CD4-positive, alpha-beta memory T cell (primary cell): ENCODE measurements at regions of chr5 and their contacts with region 1.

Region 1: GRCh38 chr5:43484106-43484849 is 613 bp upstream of the TMEM267 start:
- DNase-seq: peak; percentile 85 to 89 (median 87)
- H3K4me3 ChIP-seq: peak overlapping the region; percentile 50 to 59
- H3K4me3 Mint-ChIP-seq: peak overlapping the region; percentile 96 to 99 (median 98)
- H3K27ac ChIP-seq: peak overlapping the region; percentile 92
- H3K27ac Mint-ChIP-seq: peak overlapping the region; percentile 98 to 100 (median 100)
- H3K4me1 ChIP-seq: peaks cover 40% of the 10 kb centered on the region
- H3K4me1 Mint-ChIP-seq: peaks cover 21 to 57% (median 31%) of the 10 kb centered on the region in 4 donors
- H3K27me3 ChIP-seq: no peaks in the 10 kb centered on the region
- H3K27me3 Mint-ChIP-seq: no peaks in the 10 kb centered on the region

Region 2: DNA sequence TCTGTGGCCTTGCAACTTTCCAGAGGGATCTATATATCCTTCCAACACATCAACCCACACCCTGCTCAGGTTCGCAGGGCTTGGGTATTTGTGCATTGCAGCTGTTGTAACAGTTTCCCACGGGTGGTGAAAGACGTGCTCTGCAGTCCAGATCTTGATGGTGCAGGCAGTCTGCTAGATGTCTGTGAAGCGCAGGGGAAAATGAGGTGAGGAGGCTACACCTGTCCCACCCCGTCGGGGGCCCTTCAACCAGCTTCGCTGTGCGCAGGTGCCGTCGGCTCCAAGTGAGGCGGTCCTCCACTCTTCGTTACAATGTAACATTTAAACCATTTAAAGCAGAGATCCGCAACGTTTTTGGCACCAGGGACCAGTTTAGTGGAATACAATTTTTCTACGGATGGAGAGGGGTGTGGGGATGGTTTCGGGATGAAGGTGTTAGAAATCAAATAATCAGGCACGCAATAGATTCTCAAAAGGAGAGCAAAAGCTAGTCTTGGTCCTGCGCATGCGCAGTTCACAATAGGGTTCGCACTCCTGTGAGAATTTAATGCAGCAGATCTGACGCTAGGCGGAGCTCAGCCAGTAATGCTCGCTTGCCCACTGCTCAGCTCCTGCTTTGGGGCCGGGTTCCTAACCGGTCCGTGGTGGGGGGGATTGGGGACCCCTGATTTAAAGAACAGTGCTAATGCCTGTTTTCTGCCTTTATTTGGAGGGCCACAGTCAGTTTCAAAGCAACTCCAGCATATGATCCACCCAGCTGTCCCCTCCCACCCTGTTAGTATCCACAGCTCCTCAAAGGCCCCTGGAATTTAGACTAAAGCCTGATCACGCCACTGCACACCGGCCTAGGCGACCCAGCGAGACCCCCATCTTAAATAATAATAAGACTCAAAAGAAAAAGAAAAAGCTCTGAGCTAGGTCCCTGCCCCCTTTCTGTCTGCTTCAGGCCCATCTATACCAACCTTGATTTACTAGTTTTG is 575.5 kb before region 1 on chr5:
- CTCF ChIA-PET with region 1: interaction called, 16 read pairs
- POLR2A ChIA-PET with region 1: interaction called, 22 read pairs
- intact Hi-C with region 1: loop called (anchors 5 kb)
- DNase-seq: peak; percentile 89 to 90 (median 89)
- H3K4me3 ChIP-seq: peak overlapping the region; percentile 40 to 56
- H3K4me3 Mint-ChIP-seq: peak overlapping the region; percentile 88 to 97 (median 93)
- H3K27ac ChIP-seq: peak overlapping the region; percentile 44
- H3K27ac Mint-ChIP-seq: peak overlapping the region; percentile 66 to 97 (median 95)
- H3K4me1 ChIP-seq: peaks cover 7% of the 10 kb centered on the region
- H3K4me1 Mint-ChIP-seq: peaks cover 8 to 18% (median 12%) of the 10 kb centered on the region in 4 donors
- H3K27me3 ChIP-seq: no peaks in the 10 kb centered on the region
- H3K27me3 Mint-ChIP-seq: peaks cover 10% of the 10 kb centered on the region in 2 donors

Region 3: DNA sequence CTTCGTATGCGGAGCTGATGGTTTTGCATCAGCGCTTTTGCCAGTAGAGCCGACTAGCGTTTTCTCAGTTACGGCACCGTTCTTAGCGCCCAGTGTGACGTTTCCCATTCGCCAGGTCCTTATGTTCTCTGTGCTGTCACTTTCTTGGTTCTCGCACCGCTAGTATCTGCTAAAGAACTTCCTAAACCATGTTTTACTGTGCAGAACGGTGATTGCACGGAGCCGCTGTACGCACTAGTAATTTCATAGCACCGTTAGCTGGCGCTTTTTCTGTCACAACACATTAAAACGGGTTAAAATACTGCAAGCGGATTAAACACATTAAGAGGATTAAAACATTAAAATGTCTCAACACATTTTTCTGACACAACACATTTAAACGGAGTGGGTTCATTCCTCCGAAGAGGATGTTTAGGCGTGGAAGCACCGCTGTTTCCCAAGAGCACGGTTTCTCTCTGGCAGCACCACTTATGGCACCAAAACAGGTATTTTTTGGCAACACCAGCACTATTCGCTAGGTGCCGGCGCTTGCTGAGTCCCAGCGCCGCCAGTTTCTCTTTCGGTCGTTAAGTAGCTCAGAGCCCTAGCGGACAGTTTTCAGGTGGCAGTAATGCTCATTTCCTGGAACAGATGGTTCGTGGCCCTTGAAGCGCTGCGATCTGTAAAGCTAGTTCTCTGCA is 464.5 kb before region 1 on chr5:
- CTCF ChIA-PET with region 1: interaction called, 14 read pairs
- POLR2A ChIA-PET with region 1: interaction called, 81 read pairs
- intact Hi-C with region 1: loop called (anchors 5 kb)
- DNase-seq: peak; percentile 84 to 94 (median 91)
- H3K4me3 ChIP-seq: peak overlapping the region; percentile 73 to 83
- H3K4me3 Mint-ChIP-seq: peak overlapping the region; percentile 94 to 99 (median 98)
- H3K27ac ChIP-seq: peak overlapping the region; percentile 94
- H3K27ac Mint-ChIP-seq: peak overlapping the region; percentile 99 to 100 (median 100)
- H3K4me1 ChIP-seq: peaks cover 40% of the 10 kb centered on the region
- H3K4me1 Mint-ChIP-seq: peaks cover 24 to 67% (median 34%) of the 10 kb centered on the region in 4 donors
- H3K27me3 ChIP-seq: no peaks in the 10 kb centered on the region
- H3K27me3 Mint-ChIP-seq: no peaks in the 10 kb centered on the region

Region 4: GRCh38 chr5:43120720-43121564 is 363.3 kb before region 1 on chr5 and contains the start of gene ZNF131:
- CTCF ChIA-PET with region 1: interaction called, 24 read pairs
- POLR2A ChIA-PET with region 1: interaction called, 122 read pairs
- intact Hi-C with region 1: loop called (anchors 1 kb)
- DNase-seq: peak; percentile 95 to 100 (median 98)
- H3K4me3 ChIP-seq: peak within 1 kb of the TSS; percentile 85 to 87
- H3K4me3 Mint-ChIP-seq: peak within 1 kb of the TSS; percentile 91 to 96 (median 94)
- H3K27ac ChIP-seq: peak within 1 kb of the TSS; percentile 97
- H3K27ac Mint-ChIP-seq: peak within 1 kb of the TSS; percentile 87 to 99 (median 98)
- H3K4me1 ChIP-seq: peaks cover 45% of the 10 kb centered on the region
- H3K4me1 Mint-ChIP-seq: peaks cover 21 to 46% (median 37%) of the 10 kb centered on the region in 4 donors
- H3K27me3 ChIP-seq: no peaks in the 10 kb centered on the region
- H3K27me3 Mint-ChIP-seq: no peaks in the 10 kb centered on the region
- total RNA-seq, gene ZNF131: 76.5 to 86.9 TPM

Region 5: DNA sequence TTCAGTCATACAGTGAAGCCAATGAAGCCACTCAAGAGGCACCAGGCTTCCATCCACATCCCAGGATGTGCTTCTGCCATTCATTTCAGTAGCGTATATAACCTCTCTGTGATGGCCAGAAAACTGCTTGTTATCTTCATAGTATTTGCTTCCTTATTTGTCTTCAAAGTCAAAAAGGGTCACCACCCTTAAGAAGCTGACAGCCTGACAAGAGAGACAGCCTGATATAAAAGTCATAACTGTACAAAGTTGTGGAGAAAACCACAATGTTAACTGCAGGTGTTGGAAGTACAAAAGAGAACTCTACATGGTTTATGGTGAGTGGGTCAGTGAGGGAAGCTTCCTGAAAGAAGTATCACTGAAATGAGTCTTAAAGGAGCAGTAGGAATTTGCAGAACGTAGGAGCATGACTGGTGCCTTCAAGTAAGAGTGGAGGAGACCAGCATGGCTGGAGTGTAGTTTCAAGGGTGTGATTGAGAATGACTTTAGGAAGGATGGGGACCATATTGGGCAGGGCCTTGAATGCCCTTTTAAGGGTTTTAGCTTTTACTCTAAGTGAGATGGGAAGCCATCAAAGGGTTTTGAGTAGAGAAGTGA is 258.5 kb before region 1 on chr5:
- CTCF ChIA-PET with region 1: no interaction called
- POLR2A ChIA-PET with region 1: no interaction called
- intact Hi-C with region 1: no loop called
- DNase-seq: no peak
- H3K4me3 ChIP-seq: no peak overlapping the region
- H3K4me3 Mint-ChIP-seq: no peak overlapping the region
- H3K27ac ChIP-seq: no peak overlapping the region
- H3K27ac Mint-ChIP-seq: no peak overlapping the region
- H3K4me1 ChIP-seq: no peaks in the 10 kb centered on the region
- H3K4me1 Mint-ChIP-seq: no peaks in the 10 kb centered on the region
- H3K27me3 ChIP-seq: no peaks in the 10 kb centered on the region
- H3K27me3 Mint-ChIP-seq: peaks cover 0 to 2% of the 10 kb centered on the region in 2 donors

Region 6: GRCh38 chr5:43396762-43397304 is 87.4 kb before region 1 on chr5:
- CTCF ChIA-PET with region 1: interaction called, 17 read pairs
- POLR2A ChIA-PET with region 1: interaction called, 70 read pairs
- intact Hi-C with region 1: loop called (anchors 1 kb)
- DNase-seq: peak; percentile 61 to 66 (median 64)
- H3K4me3 ChIP-seq: peak overlapping the region; percentile 94 to 95
- H3K4me3 Mint-ChIP-seq: peak overlapping the region; percentile 92 to 100 (median 98)
- H3K27ac ChIP-seq: peak overlapping the region; percentile 58
- H3K27ac Mint-ChIP-seq: peak overlapping the region; percentile 84 to 99 (median 96)
- H3K4me1 ChIP-seq: peaks cover 15% of the 10 kb centered on the region
- H3K4me1 Mint-ChIP-seq: peaks cover 9 to 44% (median 21%) of the 10 kb centered on the region in 4 donors
- H3K27me3 ChIP-seq: no peaks in the 10 kb centered on the region
- H3K27me3 Mint-ChIP-seq: no peaks in the 10 kb centered on the region

Region 7: GRCh38 chr5:43514816-43515677 is 30.8 kb after region 1 on chr5 and contains the start of gene C5orf34:
- CTCF ChIA-PET with region 1: interaction called, 19 read pairs
- POLR2A ChIA-PET with region 1: interaction called, 112 read pairs
- intact Hi-C with region 1: loop called (anchors 1 kb)
- DNase-seq: peak; percentile 90 to 93 (median 91)
- H3K4me3 ChIP-seq: peak within 1 kb of the TSS; percentile 54 to 92
- H3K4me3 Mint-ChIP-seq: peak within 1 kb of the TSS; percentile 90 to 97 (median 94)
- H3K27ac ChIP-seq: peak within 1 kb of the TSS; percentile 76
- H3K27ac Mint-ChIP-seq: peak within 1 kb of the TSS; percentile 90 to 98 (median 95)
- H3K4me1 ChIP-seq: peaks cover 25% of the 10 kb centered on the region
- H3K4me1 Mint-ChIP-seq: peaks cover 22 to 35% (median 27%) of the 10 kb centered on the region in 4 donors
- H3K27me3 ChIP-seq: no peaks in the 10 kb centered on the region
- H3K27me3 Mint-ChIP-seq: no peaks in the 10 kb centered on the region
- total RNA-seq, gene C5orf34: 2.5 to 2.9 TPM